ENCODE measurements at regions of chr6 and their contacts with region 1.

Region 1: GRCh38 chr6:2988426-2989331 is 11.0 kb upstream of the NQO2 start:
- DNase-seq: peak; percentile 90 to 95
- ATAC-seq: peak; percentile 85 to 94 (median 88)
- H3K4me3 ChIP-seq: peak overlapping the region; percentile 59 to 97 (median 75)
- H3K27ac ChIP-seq: peak overlapping the region; percentile 77 to 99 (median 98)
- H3K4me1 ChIP-seq: peaks cover 0 to 34% (median 20%) of the 10 kb centered on the region in 9 donors
- H3K27me3 ChIP-seq: no peaks in the 10 kb centered on the region
- CTCF ChIP-seq: peak; percentile 70 to 93 (median 88)

Region 2: GRCh38 chr6:2791124-2791974 is 197.3 kb before region 1 on chr6:
- intact Hi-C with region 1: loop called in 1 of 10 experiments (anchors 2 kb)
- DNase-seq: peak; percentile 38 to 77
- ATAC-seq: peak; percentile 78 to 92 (median 90)
- H3K4me3 ChIP-seq: peak overlapping the region in 2 of 10 donors; percentile 5 to 10
- H3K27ac ChIP-seq: peak overlapping the region; percentile 29 to 87 (median 72)
- H3K4me1 ChIP-seq: peaks cover 6 to 57% (median 36%) of the 10 kb centered on the region in 9 donors
- H3K27me3 ChIP-seq: no peaks in the 10 kb centered on the region
- CTCF ChIP-seq: peak; percentile 54 to 89 (median 79)

Region 3: GRCh38 chr6:2848851-2849250 is 139.8 kb before region 1 on chr6:
- intact Hi-C with region 1: loop called in 8 of 10 experiments (anchors 1 to 10 kb)
- DNase-seq: no peak
- ATAC-seq: no peak
- H3K4me3 ChIP-seq: no peak overlapping the region
- H3K27ac ChIP-seq: no peak overlapping the region
- H3K4me1 ChIP-seq: peaks cover 6 to 34% (median 22%) of the 10 kb centered on the region in 9 donors
- H3K27me3 ChIP-seq: no peaks in the 10 kb centered on the region
- CTCF ChIP-seq: no peak

Region 4: DNA sequence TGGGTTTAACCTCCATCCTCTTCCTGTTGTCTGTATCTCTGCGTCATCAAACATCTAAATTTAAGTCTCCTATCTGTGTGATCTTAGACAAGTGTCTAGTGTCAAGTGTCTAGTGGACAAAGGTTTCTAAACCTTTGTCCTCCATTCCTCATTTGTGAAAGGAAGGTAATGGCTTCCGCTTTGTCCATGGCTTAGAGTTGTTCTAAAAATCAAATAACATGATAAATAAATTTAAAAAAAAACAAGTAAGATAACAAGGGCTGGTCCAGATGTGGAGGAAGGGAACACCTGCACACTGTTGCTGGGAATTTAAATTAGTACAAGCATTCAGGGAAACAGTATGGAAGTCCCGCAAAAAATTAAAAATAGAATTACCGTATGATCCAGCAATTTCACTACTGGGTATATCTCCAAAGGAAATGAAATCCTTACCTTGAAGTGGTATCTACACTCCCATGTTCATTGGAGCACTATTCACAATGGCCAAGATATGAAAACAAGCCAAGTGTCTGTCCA is 129.4 kb before region 1 on chr6:
- intact Hi-C with region 1: no loop called
- DNase-seq: no peak
- ATAC-seq: no peak
- H3K4me3 ChIP-seq: no peak overlapping the region
- H3K27ac ChIP-seq: peak overlapping the region in 7 of 10 donors; percentile 65 to 95 (median 81)
- H3K4me1 ChIP-seq: peaks cover 14 to 79% (median 37%) of the 10 kb centered on the region in 9 donors
- H3K27me3 ChIP-seq: no peaks in the 10 kb centered on the region
- CTCF ChIP-seq: no peak

Region 5: GRCh38 chr6:2952557-2953095 is 36.1 kb before region 1 on chr6:
- intact Hi-C with region 1: loop called (anchors 1 to 5 kb)
- DNase-seq: peak; percentile 74 to 76
- ATAC-seq: peak; percentile 48 to 86 (median 74)
- H3K4me3 ChIP-seq: peak overlapping the region in 3 of 10 donors; percentile 3 to 12 (median 4)
- H3K27ac ChIP-seq: peak overlapping the region; percentile 24 to 73 (median 63)
- H3K4me1 ChIP-seq: peaks cover 7 to 57% (median 33%) of the 10 kb centered on the region in 9 donors
- H3K27me3 ChIP-seq: no peaks in the 10 kb centered on the region
- CTCF ChIP-seq: peak; percentile 90 to 99 (median 97)

Region 6: GRCh38 chr6:3013479-3013878 is 24.8 kb after region 1 on chr6:
- intact Hi-C with region 1: no loop called
- DNase-seq: peak in 1 of 2 donors; percentile 31
- ATAC-seq: peak in 3 of 8 donors; percentile 37 to 67 (median 53)
- H3K4me3 ChIP-seq: no peak overlapping the region
- H3K27ac ChIP-seq: peak overlapping the region in 1 of 10 donors; percentile 45
- H3K4me1 ChIP-seq: peaks cover 0 to 7% (median 0%) of the 10 kb centered on the region in 9 donors
- H3K27me3 ChIP-seq: no peaks in the 10 kb centered on the region
- CTCF ChIP-seq: no peak

Region 7: GRCh38 chr6:3258720-3259490 is 270.2 kb after region 1 on chr6 and contains the start of gene PSMG4:
- intact Hi-C with region 1: loop called in 3 of 10 experiments (anchors 10 kb)
- DNase-seq: peak; percentile 97 to 98
- ATAC-seq: peak; percentile 97 to 98 (median 98)
- H3K4me3 ChIP-seq: peak within 1 kb of the TSS; percentile 76 to 99 (median 94)
- H3K27ac ChIP-seq: peak within 1 kb of the TSS; percentile 14 to 92 (median 84)
- H3K4me1 ChIP-seq: peaks cover 2 to 41% (median 28%) of the 10 kb centered on the region in 9 donors
- H3K27me3 ChIP-seq: no peaks in the 10 kb centered on the region
- CTCF ChIP-seq: peak in 2 of 9 donors; percentile 4 to 21
- total RNA-seq, gene PSMG4: 8.1 to 10.8 (median 10.0) TPM